MCF 10A (cell line): ENCODE measurements at regions of chr11 and their contacts with region 1.

Region 1: DNA sequence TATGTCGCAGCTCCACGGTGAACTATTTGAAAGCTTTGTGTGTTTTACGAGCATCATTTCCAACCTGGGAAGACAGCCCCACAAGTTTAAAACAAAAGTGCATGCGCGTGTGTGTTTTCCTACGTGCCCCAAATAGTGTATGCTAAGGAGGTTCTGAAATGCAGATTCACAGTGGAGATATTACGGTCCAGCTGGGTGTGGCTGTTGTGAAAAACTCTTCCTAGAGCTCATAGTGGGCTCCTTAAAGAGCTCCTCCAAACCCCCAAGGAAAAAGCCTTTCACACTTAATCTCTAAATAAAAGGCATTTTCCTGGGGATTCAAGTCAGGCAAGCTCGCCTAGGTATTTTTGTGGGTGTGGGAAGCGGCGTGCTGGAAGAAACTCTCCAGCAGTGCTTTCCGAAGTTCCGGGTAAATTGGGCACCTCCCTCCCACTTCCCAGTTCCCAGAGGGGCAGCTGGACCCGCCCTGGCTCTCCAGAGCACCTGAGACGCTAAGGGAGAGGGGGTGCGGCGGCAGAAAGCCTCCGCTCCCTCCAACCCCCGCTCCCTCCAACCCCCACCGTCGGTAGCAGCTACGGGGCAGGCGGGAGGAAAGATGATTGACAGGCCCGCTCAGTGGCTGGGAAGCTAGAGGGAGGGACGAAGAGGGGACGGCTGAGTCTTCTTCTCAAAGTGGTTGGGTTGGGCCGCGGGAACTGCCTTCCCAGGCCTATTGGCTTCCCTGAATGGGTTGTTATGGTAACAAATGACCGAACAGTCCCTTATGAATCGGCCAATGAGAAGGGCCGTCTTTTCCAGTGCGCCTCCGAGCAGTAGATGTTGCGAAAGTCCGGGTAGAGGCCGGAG is 558 bp upstream of the PCF11 start:
- DNase-seq: peak; percentile 100
- H3K4me3 Mint-ChIP-seq: peak overlapping the region; percentile 98
- H3K27ac Mint-ChIP-seq: peak overlapping the region; percentile 100
- H3K4me1 Mint-ChIP-seq: peaks cover 7% of the 10 kb centered on the region
- H3K27me3 Mint-ChIP-seq: no peaks in the 10 kb centered on the region
- CTCF ChIP-seq: no peak

Region 2: DNA sequence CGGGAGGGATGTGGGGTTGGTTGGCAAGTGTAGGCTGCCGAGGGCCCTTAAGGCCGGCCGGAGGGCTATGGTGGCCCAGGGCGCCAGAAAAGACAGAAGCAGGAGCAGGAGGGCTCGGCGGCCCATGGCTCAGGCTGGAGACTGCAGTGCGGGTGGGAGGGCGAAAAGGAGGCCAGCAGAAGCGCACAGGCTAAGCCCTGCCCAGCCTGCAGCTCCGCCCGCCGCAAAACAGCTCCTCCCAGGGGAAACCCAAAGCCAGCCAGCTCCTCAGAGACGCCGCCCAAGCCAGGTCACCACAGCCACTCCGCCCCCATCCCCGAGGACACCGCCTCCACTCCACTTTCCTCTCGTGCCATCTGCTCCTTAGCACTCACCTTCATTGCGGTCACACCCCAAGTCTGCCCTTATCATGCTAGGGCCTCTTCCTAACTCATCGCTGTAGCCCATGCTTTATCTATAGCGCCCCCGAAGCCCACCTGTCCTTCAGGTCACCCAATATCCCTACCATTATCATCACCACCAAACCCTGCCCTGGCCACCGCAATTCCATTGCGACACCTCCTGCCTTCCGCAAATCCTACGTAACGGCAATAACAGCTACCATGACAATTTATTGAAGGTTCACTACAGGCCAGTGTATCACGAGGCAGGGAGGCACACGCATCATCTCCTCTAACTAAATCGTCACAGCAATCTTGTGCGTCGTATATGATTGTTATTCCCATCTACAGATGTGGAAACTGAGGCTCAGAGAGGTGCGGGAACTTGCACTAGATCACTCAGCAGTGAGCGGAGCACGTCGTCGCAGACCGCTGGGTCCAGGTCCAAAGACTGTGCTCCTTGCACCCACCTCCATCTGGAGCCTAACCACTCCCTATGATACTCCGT is 255.9 kb before region 1 on chr11 and contains the start of gene PRCP:
- CTCF ChIA-PET with region 1: interaction called, 4 read pairs
- POLR2A ChIA-PET with region 1: interaction called, 126 read pairs
- intact Hi-C with region 1: loop called (anchors 1 kb)
- DNase-seq: peak; percentile 91
- H3K4me3 Mint-ChIP-seq: peak within 1 kb of the TSS; percentile 88
- H3K27ac Mint-ChIP-seq: peak within 1 kb of the TSS; percentile 95
- H3K4me1 Mint-ChIP-seq: peaks cover 38% of the 10 kb centered on the region
- H3K27me3 Mint-ChIP-seq: no peaks in the 10 kb centered on the region
- CTCF ChIP-seq: no peak
- total RNA-seq, gene PRCP: 17.3 and 22.7 TPM in 2 replicates

Region 3: DNA sequence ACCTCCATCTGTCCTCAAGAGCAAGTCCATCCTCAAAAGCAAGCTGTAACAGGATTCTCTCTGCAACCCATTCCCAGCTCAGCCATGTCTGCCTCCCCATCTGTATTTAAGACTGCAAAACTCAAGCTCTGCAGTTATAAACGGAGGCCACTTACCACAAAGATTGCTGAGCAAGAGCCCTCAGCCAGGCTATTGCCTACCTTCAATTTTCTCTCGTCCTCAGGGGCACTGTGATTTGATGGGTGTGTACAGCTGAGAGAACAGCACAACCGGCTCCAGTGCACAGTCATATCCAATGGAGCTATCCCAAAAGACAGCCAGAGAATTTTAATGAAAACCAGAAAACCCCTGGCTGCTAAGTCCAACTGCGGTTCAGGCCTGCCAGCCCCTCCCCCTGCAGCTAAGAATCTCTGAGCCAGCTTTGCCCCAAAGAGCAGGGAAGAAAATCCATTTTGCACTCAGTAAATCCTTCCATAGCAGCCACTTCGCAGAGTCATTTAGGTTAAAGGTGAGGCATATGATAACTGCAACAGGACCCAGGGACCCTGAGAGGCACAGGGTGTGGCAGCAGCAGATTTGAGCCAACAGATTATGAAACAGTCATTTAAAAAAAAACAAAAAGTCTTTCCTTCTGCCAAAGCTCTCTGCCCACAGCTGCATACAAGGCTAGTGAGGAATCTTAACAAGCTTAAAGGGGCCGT is 122.3 kb before region 1 on chr11:
- CTCF ChIA-PET with region 1: no interaction called
- POLR2A ChIA-PET with region 1: interaction called, 79 read pairs
- intact Hi-C with region 1: no loop called
- DNase-seq: peak; percentile 77
- H3K4me3 Mint-ChIP-seq: peak overlapping the region; percentile 66
- H3K27ac Mint-ChIP-seq: peak overlapping the region; percentile 72
- H3K4me1 Mint-ChIP-seq: peaks cover 22% of the 10 kb centered on the region
- H3K27me3 Mint-ChIP-seq: no peaks in the 10 kb centered on the region
- CTCF ChIP-seq: no peak

Region 4: DNA sequence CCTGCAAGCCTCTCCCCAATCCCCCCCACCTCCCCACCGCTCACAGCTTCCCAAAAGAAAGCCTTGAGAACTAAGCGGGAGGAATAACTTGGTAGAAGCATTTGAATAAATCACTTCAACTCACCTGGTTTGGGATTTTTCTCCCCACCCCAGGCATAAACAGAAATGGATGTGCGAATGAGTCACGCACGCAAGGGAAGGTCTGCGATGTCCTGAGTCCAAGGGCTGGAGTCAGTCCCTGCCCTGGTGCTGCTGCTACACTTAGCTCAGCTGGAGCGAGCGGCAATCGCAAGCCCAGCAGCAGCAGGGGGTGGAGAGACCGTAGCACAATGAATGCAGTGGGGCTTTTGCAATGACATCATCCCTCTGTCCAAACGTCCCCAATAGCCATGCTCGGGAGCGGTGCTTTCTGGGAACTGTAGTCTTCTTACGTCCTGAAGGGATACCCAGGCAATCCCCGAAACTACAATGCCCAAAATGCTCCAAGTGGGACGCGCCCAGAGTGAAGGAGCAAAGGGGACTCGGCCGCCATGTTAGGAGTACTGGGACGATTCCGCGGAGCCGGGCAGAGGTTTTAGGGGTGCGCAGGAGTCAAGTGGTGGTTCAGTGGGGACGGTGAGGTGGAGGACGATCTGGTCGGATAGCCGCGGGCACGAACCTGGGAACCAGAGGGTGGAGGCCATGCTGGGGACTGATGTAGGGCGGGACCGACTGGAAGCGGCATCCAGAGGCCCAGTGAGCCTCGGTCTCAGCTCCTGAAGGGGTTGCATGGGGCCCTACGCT is 84.6 kb before region 1 on chr11 and contains the start of gene RAB30:
- CTCF ChIA-PET with region 1: interaction called, 7 read pairs
- POLR2A ChIA-PET with region 1: interaction called, 188 read pairs
- intact Hi-C with region 1: loop called (anchors 1 kb)
- DNase-seq: peak; percentile 100
- H3K4me3 Mint-ChIP-seq: no peak within 1 kb of the TSS
- H3K27ac Mint-ChIP-seq: no peak within 1 kb of the TSS
- H3K4me1 Mint-ChIP-seq: peaks cover 26% of the 10 kb centered on the region
- H3K27me3 Mint-ChIP-seq: no peaks in the 10 kb centered on the region
- CTCF ChIP-seq: no peak
- total RNA-seq, gene RAB30: 12.5 and 13.2 TPM in 2 replicates

Region 5: DNA sequence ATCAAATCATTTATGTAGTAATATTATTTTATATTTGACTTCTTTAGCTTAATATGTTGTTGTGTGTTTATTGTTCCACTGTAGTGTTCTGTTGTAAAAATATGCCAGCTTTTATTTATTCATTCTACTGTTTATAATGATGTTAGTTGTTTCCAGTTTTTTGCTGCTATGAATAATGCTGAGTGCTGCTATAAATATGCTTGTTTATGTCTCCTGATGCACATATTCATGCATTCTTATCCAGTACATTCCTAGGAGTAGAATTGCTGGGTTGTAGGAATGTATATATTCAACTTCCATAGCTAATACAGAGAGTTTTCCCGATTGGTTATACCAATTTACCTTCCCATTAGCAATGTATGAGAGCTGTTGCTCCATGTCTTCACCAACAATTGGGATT is 51.2 kb before region 1 on chr11:
- CTCF ChIA-PET with region 1: no interaction called
- POLR2A ChIA-PET with region 1: interaction called, 10 read pairs
- intact Hi-C with region 1: no loop called
- DNase-seq: no peak
- H3K4me3 Mint-ChIP-seq: no peak overlapping the region
- H3K27ac Mint-ChIP-seq: no peak overlapping the region
- H3K4me1 Mint-ChIP-seq: no peaks in the 10 kb centered on the region
- H3K27me3 Mint-ChIP-seq: peaks cover 13% of the 10 kb centered on the region
- CTCF ChIP-seq: no peak

Region 6: GRCh38 chr11:83181815-83182214 is 25.4 kb after region 1 on chr11:
- CTCF ChIA-PET with region 1: interaction called, 3 read pairs
- POLR2A ChIA-PET with region 1: interaction called, 52 read pairs
- intact Hi-C with region 1: no loop called
- DNase-seq: no peak
- H3K4me3 Mint-ChIP-seq: no peak overlapping the region
- H3K27ac Mint-ChIP-seq: no peak overlapping the region
- H3K4me1 Mint-ChIP-seq: no peaks in the 10 kb centered on the region
- H3K27me3 Mint-ChIP-seq: no peaks in the 10 kb centered on the region
- CTCF ChIP-seq: no peak

Region 7: GRCh38 chr11:83241291-83241946 is 85.0 kb after region 1 on chr11:
- CTCF ChIA-PET with region 1: no interaction called
- POLR2A ChIA-PET with region 1: no interaction called
- intact Hi-C with region 1: loop called (anchors 10 kb)
- DNase-seq: peak; percentile 80
- H3K4me3 Mint-ChIP-seq: no peak overlapping the region
- H3K27ac Mint-ChIP-seq: no peak overlapping the region
- H3K4me1 Mint-ChIP-seq: no peaks in the 10 kb centered on the region
- H3K27me3 Mint-ChIP-seq: no peaks in the 10 kb centered on the region
- CTCF ChIP-seq: peak; percentile 47

Region 8: GRCh38 chr11:83449338-83449913 is 293.1 kb after region 1 on chr11:
- CTCF ChIA-PET with region 1: no interaction called
- POLR2A ChIA-PET with region 1: no interaction called
- intact Hi-C with region 1: no loop called
- DNase-seq: no peak
- H3K4me3 Mint-ChIP-seq: no peak overlapping the region
- H3K27ac Mint-ChIP-seq: no peak overlapping the region
- H3K4me1 Mint-ChIP-seq: no peaks in the 10 kb centered on the region
- H3K27me3 Mint-ChIP-seq: peaks cover 16% of the 10 kb centered on the region
- CTCF ChIP-seq: no peak